Transverse colon (tissue), 4 donors: ENCODE measurements at regions of chr9 and their contacts with region 1.

Region 1: DNA sequence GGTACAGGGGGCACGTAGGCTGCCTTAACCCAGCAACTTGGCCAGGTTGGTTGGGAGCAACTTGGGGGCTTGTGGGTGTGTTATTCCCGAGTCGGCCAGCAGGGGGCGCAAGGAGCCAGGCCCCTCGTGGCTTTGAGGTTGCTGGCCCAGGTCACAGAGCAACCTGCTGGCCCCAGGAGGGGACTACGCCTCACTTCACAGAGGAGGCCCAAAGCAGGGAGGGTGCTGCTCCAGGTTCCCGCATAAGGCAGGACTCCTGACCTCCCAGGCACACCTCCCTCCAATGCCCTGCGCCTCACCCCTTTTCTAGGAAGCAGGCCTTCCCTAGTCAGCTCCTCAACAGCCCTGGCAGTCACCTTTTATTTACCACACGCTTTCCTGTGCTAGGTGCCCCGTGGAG is 18.1 kb downstream of the KYAT1 start:
- DNase-seq: peak; percentile 80
- H3K4me3 ChIP-seq: no peak overlapping the region
- H3K27ac ChIP-seq: no peak overlapping the region
- H3K4me1 ChIP-seq: peaks cover 0 to 7% (median 2%) of the 10 kb centered on the region in 4 donors
- H3K27me3 ChIP-seq: no peaks in the 10 kb centered on the region
- CTCF ChIP-seq: peak; percentile 93 to 98 (median 97)
- EP300 ChIP-seq: no peak
- POLR2A ChIP-seq: no peak

Region 2: DNA sequence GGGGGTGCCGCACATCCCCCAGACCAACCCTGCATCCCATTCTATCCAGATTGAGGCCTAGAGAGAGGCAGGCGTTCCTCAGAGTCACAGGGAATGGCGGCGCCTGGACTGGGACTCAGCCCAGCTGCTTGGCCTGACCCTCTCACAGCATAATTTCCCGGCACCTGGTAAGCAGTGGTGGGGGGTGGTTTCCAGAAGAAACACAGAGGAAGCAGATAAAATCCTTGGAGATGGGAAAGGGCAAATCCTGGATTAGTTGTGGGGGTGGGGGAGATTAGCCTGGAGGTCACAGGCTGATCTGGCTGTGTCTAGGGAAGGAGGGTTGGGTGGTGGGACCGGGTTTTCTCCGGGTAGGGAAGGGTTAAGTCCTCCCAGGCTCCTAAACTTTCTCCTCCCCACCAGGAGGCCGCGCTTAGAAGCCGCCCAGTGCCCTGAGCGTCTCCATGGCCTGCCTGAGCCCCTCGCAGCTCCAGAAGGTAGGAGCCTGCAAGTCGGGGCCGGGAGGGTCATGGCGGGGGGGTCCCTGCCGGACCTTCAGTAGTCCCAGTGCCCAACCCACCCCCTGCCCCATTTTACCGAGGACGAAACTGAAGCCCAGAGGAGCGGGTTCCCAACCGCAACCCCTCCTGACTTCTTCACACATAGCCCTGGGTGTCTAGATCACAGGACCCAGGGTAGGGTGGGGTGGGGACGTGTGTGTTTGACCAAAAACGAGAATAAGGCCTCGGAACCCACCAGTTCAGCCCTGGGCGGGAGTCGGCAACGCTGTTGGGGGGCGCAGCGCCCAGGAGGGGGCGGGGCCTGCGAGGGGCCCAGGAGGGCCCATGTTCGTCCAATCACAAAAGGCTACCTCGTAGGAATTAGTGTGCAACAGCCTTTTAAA is 58.5 kb after region 1 on chr9:
- in situ Hi-C with region 1: loop called (anchors 5 to 10 kb)
- intact Hi-C with region 1: no loop called
- DNase-seq: peak; percentile 25
- H3K4me3 ChIP-seq: peak overlapping the region; percentile 11 to 60 (median 38)
- H3K27ac ChIP-seq: peak overlapping the region; percentile 81 to 85 (median 82)
- H3K4me1 ChIP-seq: peaks cover 1 to 37% (median 20%) of the 10 kb centered on the region in 4 donors
- H3K27me3 ChIP-seq: no peaks in the 10 kb centered on the region
- CTCF ChIP-seq: no peak
- EP300 ChIP-seq: no peak
- POLR2A ChIP-seq: no peak

Region 3: GRCh38 chr9:128927731-128928411 is 64.2 kb after region 1 on chr9:
- in situ Hi-C with region 1: loop called (anchors 5 to 10 kb)
- intact Hi-C with region 1: loop called (anchors 1 kb)
- DNase-seq: peak; percentile 54
- H3K4me3 ChIP-seq: no peak overlapping the region
- H3K27ac ChIP-seq: no peak overlapping the region
- H3K4me1 ChIP-seq: peaks cover 0 to 11% (median 0%) of the 10 kb centered on the region in 4 donors
- H3K27me3 ChIP-seq: no peaks in the 10 kb centered on the region
- CTCF ChIP-seq: peak; percentile 83 to 93 (median 88)
- EP300 ChIP-seq: no peak
- POLR2A ChIP-seq: no peak

Region 4: DNA sequence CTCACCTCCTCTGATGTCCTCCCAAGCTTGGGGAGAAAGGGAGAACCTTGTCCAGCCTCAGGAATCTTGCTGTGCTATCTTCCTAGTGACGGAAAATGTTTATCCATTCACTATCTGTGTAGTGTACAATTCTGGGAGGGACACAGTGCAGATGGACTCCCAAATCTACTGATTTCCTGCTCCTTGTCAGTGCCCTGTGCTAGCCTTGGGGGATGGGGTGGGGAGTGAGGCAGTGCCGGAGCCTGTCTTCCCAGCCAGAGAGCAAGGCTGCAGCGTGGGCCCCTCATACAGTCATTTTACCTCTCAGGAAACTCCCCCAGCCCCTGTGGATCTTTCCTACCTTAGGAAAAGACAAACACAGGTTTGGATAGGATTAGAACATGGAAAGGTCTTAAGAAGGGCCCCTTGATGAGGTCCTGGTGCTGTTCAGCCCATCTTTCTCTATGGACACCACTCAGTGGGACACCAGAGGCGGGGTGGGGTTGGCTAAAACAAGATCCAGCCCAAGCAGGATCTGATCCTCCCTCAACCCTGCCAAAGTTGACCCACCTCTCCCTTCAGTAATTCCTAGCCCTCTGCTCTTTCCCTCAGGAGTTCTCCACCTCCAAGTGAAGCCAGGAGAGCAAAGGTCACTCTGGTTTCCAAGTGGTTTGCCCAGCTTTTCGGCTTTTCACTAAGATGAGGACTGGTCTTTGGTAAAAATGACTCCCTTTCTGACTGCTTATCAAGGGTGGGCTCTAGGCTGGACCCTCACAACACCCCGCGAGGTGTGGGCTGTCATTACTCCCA is 80.4 kb after region 1 on chr9:
- in situ Hi-C with region 1: no loop called
- intact Hi-C with region 1: loop called (anchors 1 kb)
- DNase-seq: no peak
- H3K4me3 ChIP-seq: no peak overlapping the region
- H3K27ac ChIP-seq: no peak overlapping the region
- H3K4me1 ChIP-seq: peaks cover 0 to 18% (median 10%) of the 10 kb centered on the region in 4 donors
- H3K27me3 ChIP-seq: no peaks in the 10 kb centered on the region
- CTCF ChIP-seq: no peak
- EP300 ChIP-seq: no peak
- POLR2A ChIP-seq: no peak